ENCODE measurements at regions of chr19 and their contacts with region 1.

Region 1: DNA sequence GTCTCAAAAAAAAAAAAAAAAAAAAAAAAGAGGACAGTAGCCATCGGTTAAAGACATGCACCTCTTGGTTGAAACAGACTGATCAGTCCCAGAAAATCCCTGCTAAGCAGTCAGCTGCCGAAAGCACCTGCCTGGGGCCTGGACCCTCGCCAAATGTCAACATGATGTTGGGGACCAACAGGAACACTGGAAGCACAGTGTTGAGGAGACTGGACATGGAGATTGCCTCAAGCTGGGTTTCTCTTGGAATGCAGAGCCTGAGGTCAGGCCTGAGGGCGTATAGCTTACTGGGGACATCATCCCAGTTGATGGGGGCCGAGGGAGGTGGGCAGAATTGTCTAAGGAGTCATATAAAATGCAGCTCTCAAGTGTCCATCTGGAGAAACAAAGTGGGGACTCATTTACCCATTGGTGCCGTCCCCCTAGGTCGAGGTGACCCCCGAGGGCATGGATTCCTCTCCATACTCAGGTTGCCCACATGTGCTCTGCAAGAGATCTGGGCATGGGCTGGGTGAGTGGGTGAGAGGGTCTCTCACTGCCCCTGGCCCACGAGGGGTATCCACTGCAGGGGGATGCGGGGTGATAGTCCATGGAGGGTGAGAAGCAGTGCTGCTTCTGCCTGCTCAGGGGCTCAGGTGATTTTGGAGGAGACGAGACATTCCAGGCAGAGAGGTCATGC is 164.5 kb downstream of the URI1 start:
- DNase-seq: no peak
- ATAC-seq: no peak
- H3K4me3 ChIP-seq: no peak overlapping the region
- H3K27ac ChIP-seq: no peak overlapping the region
- H3K4me1 ChIP-seq: no peaks in the 10 kb centered on the region
- H3K27me3 ChIP-seq: peaks cover 8% of the 10 kb centered on the region; the same call in 1 of the 2 replicates
- CTCF ChIP-seq: no peak

Region 2: DNA sequence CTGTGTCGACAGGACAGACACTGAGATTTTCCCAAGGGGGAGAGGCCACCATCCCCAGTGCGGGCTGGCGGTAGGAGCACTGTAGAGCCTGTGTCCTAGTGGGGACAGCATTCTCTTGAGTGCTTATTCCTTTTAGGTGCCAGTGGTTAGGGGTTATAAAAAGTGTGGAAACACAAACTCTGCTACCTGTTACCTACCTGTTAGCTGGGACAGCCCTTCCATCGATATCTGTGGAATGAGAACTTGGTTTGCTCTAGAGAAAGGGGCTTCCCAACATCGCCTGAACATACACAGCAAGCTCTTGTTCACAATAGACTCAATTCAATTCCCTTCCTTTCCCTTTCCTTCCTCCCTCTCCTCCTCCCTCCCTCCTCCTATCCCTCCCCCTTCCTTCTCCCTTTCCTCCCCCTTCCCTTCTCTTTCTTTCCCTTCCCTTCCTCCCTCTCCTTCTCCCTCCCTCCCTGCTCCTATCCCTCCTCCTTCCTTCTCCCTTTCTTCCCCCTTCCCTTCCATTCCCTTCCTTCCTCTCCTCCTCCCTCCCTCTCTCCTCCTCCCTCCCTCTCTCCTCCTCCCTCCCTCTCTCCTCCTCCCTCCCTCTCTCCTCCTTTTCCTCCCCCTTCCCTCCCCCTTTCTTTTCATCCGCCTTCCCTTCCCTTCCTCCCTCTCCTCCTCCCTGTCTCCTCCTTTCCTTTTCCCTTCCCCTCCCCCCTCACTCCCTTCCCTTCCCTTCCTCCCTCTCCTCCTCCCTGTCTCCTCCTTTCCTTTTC is 24.0 kb after region 1 on chr19:
- CTCF ChIA-PET with region 1: interaction called, 10 read pairs
- POLR2A ChIA-PET with region 1: no interaction called
- in situ Hi-C with region 1: no loop called
- intact Hi-C with region 1: no loop called
- DNase-seq: no peak
- ATAC-seq: no peak
- H3K4me3 ChIP-seq: no peak overlapping the region
- H3K27ac ChIP-seq: no peak overlapping the region
- H3K4me1 ChIP-seq: no peaks in the 10 kb centered on the region
- H3K27me3 ChIP-seq: no peaks in the 10 kb centered on the region
- CTCF ChIP-seq: no peak